ENCODE measurements at regions of chr13 and their contacts with region 1.

Region 1: GRCh38 chr13:28623782-28624706 is 34.9 kb upstream of the POMP start:
- DNase-seq: peak; percentile 31

Region 2: DNA sequence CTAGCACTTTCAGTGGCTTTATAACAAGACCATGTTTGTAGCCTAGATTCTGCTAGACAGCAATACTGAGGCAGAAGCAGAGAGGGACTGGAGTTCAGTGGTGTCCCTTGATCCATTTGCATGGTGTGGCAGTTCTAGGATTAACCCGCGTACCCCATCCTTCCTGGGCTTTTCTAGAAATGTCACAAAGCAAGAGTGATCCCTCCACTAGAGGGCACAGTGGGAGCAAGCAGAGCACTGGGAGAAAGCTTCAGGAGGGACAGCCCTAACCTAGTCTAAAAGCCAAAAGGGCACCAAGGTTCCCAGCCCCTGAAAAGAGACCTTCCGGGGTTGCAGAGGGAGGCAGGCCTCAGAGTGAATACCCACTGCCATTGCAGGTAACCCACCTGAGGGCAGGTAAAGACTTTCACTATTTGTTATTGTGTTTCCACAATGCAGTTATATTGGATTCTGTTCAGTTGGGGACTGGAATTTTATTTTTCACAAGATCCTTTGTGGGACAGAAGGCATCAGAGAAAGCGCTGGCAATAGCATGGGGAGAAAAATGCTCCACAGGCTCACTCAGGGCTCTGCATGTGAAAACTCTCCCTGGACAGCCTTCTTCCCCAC is 299.8 kb before region 1 on chr13:
- in situ Hi-C with region 1: loop called (anchors 10 kb)
- DNase-seq: peak; percentile 78